SK-N-SH (cell line): ENCODE measurements at regions of chr22 and their contacts with region 1.

Region 1: DNA sequence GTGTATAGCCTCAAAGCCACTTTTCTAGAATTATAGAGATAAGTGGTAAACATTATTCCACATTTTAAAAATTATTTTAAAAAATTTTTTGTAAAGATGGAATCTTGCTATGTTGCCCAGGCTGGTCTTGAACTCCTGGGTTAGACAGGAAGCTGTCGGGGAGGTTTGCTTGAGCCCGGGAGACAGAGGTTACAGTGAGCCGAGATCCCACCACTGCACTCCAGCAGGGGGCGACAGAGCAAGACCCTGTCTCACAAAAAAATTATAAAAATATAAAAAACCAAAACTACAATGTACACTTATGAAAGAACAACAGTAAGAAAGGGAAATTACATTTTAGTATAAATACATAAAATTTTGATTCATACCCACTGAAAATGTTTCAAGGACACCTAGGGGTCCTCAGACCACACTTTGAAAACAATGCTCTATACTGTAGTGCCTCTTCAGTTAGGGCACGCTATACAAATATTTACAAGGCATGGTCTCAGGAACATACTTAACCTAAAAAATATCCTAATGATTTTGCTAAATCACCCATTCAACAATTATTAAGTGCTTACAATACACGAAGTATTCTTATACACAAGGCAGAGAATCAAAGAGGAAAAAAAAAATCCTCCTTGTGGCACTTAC is 111.2 kb downstream of the MRTFA start:
- DNase-seq: no peak
- H3K4me3 ChIP-seq: no peak overlapping the region; a peak in 1 of 4 replicates
- H3K27ac ChIP-seq: peak overlapping the region in 1 of 2 experiments; percentile 89; a peak in 1 of 4 replicates
- H3K4me1 ChIP-seq: no peaks in the 10 kb centered on the region
- H3K27me3 ChIP-seq: no peaks in the 10 kb centered on the region
- CTCF ChIP-seq: peak; percentile 67
- EP300 ChIP-seq: no peak
- RAD21 ChIP-seq: peak; percentile 56

Region 2: GRCh38 chr22:40396882-40397281 is 128.5 kb before region 1 on chr22:
- CTCF ChIA-PET with region 1: no interaction called
- POLR2A ChIA-PET with region 1: no interaction called
- DNase-seq: peak; percentile 75
- H3K4me3 ChIP-seq: no peak overlapping the region
- H3K27ac ChIP-seq: peak overlapping the region in 1 of 2 experiments; percentile 35; a peak in 3 of 4 replicates
- H3K4me1 ChIP-seq: peaks cover 0 to 10% of the 10 kb centered on the region in 2 experiments; a peak in 2 of 4 replicates
- H3K27me3 ChIP-seq: no peaks in the 10 kb centered on the region
- CTCF ChIP-seq: no peak
- EP300 ChIP-seq: no peak
- RAD21 ChIP-seq: no peak

Region 3: DNA sequence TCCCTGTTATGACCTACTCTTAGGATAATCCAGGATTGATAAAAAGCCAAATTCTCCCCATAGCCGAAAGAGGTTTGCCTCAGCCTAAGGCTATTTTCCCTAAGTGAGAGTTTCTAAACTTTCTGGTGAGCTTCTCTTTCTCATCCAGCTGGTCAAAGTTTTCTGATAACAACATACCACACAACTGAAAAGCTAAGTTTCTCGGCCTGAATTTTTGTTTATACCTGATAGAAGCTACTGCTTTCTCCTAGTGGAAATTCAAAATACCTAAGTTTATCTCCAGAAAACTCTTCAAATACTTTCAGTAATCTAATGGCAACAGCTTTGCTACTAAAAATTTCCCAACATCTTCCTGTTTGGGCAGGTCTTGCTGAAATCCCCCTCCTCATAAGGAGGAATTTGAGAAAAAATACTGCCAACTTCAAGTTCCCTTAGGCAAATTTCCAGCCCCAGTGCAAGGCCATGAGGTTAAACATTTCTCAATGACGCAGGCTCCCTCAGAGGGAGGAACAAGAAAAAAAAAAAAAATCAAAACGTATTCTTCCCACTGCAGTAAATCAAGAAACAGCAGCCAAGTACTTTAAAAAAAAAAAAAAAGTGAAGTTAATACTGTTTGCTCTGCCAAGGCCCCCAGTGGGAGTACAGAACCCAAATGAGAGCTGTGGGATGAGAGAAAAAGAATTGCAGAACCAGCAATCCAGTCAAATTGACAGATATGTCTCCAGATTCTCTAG is 15.8 kb before region 1 on chr22:
- CTCF ChIA-PET with region 1: interaction called, 11 read pairs
- POLR2A ChIA-PET with region 1: no interaction called
- DNase-seq: no peak
- H3K4me3 ChIP-seq: no peak overlapping the region
- H3K27ac ChIP-seq: peak overlapping the region; percentile 22 to 98; a peak in 3 of 4 replicates
- H3K4me1 ChIP-seq: peaks cover 0 to 35% of the 10 kb centered on the region in 2 experiments; a peak in 2 of 4 replicates
- H3K27me3 ChIP-seq: no peaks in the 10 kb centered on the region
- CTCF ChIP-seq: no peak
- EP300 ChIP-seq: no peak
- RAD21 ChIP-seq: no peak

Region 4: DNA sequence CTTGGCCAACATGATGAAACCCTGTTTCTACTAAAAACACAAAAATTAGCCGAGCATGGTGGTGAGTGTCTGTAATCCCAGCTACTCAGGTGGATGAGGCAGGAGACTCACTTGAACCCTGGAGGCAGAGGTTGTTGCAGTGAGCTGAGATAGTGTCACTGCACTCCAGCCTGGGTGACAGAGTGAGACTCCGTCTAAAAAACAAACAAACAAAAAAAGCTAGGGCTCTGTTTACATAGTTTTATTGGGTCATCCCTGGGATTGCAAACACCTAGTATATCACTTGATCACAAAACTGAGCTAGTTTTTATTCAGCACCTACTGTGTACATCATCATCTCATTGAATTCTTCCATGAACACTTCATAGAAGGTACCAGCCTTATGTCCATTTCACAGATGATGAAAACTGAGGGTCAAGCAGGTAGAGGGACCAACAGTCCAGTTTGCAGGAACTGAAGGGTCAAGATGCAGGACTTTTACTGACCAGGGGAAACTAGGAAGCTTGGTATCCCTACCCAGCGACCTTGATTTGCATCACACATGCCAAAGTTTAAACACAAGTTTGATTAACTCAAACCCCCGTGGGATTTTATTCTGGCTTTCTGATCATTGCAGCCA is 120.3 kb after region 1 on chr22:
- CTCF ChIA-PET with region 1: interaction called, 15 read pairs
- POLR2A ChIA-PET with region 1: no interaction called
- DNase-seq: no peak
- H3K4me3 ChIP-seq: no peak overlapping the region
- H3K27ac ChIP-seq: peak overlapping the region in 1 of 2 experiments; percentile 47; a peak in 1 of 4 replicates
- H3K4me1 ChIP-seq: no peaks in the 10 kb centered on the region
- H3K27me3 ChIP-seq: no peaks in the 10 kb centered on the region
- CTCF ChIP-seq: no peak
- EP300 ChIP-seq: no peak
- RAD21 ChIP-seq: no peak